ENCODE measurements at regions of chr12 and their contacts with region 1.

Region 1: GRCh38 chr12:52278541-52279421 is 4.3 kb downstream of the KRT86 start:
- DNase-seq: peak; percentile 33 to 91 (median 81)

Region 2: GRCh38 chr12:52167954-52168717 is 110.6 kb before region 1 on chr12:
- intact Hi-C with region 1: loop called (anchors 5 kb)
- DNase-seq: no peak